Heart left ventricle (tissue), 16 donors: ENCODE measurements at regions of chrX and their contacts with region 1.

Region 1: GRCh38 chrX:9464435-9465371 is at the start of gene TBL1X:
- DNase-seq: peak; percentile 59 to 78 (median 69)
- ATAC-seq: peak in 3 of 4 donors; percentile 60 to 67 (median 62)
- H3K4me3 ChIP-seq: peak within 1 kb of the TSS; percentile 63 to 84 (median 71)
- H3K27ac ChIP-seq: peak within 1 kb of the TSS in 10 of 12 donors; percentile 40 to 86 (median 76)
- H3K4me1 ChIP-seq: peaks cover 0 to 39% (median 12%) of the 10 kb centered on the region in 12 donors
- H3K27me3 ChIP-seq: peaks cover 0 to 59% (median 0%) of the 10 kb centered on the region in 9 donors
- CTCF ChIP-seq: no peak
- POLR2A ChIP-seq: peak in 1 of 2 donors; percentile 31
- total RNA-seq, gene TBL1X: 9.2 to 30.7 (median 10.3) TPM

Region 2: GRCh38 chrX:9231491-9231890 is 233.2 kb before region 1 on chrX:
- intact Hi-C with region 1: no loop called
- DNase-seq: no peak
- ATAC-seq: no peak
- H3K4me3 ChIP-seq: no peak overlapping the region
- H3K27ac ChIP-seq: no peak overlapping the region
- H3K4me1 ChIP-seq: no peaks in the 10 kb centered on the region
- H3K27me3 ChIP-seq: peaks cover 0 to 12% (median 0%) of the 10 kb centered on the region in 9 donors
- CTCF ChIP-seq: no peak
- POLR2A ChIP-seq: no peak

Region 3: DNA sequence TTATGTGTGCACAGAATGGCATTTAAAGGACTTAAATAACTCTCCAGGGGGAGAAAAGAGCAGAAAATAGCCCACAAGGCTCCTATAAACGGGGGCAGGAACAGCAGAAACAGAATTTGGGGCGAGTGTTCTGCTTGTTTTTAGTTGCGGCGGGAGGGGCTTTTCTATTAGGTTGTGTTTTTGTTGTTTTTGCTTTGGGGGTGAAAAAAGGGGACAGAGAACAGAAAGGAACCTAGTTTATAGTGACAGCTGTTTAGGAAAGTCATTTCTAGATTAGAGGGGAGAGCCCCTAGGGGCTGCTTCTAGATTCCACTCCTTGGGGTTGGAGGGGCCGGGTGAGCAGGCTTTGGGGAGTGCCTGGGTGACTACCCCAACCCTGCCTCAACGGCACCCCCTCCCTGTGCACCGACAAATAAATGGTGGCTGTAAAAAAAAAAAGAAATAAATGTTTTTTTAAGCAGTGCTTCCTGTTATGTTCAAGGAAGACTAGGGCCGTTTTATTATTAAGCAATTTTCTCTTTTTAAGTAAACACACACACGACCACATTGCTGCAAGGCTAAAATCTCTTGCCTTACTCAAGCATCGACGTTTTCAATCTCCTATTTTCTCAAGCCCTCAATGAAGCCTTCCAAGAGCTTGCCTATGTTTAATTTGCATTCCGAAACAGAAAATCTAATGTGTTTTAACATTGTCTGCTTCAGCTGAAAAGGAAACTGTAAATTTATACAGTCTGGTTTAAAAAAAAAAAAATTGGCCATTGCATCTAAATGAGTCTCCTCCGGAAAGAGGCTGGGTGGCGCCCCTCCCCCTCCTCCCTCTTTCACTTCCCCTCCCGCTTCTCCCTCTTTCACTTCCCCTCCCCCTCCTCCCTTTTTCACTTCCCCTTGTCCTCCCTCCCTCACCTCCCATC is 123.2 kb before region 1 on chrX:
- intact Hi-C with region 1: loop called (anchors 1 to 10 kb)
- DNase-seq: peak; percentile 67 to 81 (median 74)
- ATAC-seq: peak in 3 of 4 donors; percentile 21 to 37 (median 25)
- H3K4me3 ChIP-seq: peak overlapping the region in 9 of 12 donors; percentile 10 to 46 (median 32)
- H3K27ac ChIP-seq: peak overlapping the region; percentile 44 to 96 (median 70)
- H3K4me1 ChIP-seq: peaks cover 0 to 44% (median 17%) of the 10 kb centered on the region in 12 donors
- H3K27me3 ChIP-seq: no peaks in the 10 kb centered on the region
- CTCF ChIP-seq: no peak
- POLR2A ChIP-seq: no peak

Region 4: DNA sequence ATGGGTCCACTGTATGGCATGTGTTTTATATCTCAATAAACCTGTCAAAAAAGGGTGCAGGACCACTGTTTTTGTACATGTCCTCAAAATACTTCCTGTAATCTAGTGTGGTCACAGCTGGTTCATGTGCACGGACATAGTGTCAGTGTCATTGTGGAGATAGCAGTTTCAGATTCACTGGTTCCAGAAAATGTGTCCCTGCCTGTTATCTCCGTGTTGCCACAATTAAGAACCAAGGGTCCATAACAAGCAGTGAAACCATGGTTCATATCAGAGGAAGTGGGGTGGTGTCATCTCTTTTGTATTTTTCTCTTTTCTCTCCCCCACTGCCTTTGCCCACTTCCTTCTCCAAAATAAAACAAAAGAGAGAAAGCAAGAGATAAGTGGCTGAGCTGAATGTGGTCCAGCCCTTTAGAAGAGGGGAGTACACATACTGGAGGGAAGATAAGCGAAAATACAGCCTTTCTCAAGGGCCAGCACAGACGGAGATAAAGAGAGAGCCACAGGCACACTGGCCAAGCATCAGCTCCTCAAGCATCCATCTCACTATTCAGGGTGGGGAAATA is 51.4 kb after region 1 on chrX:
- intact Hi-C with region 1: loop called in 1 of 10 experiments (anchors 5 kb)
- DNase-seq: no peak
- ATAC-seq: peak in 1 of 4 donors; percentile 10
- H3K4me3 ChIP-seq: no peak overlapping the region
- H3K27ac ChIP-seq: no peak overlapping the region
- H3K4me1 ChIP-seq: peaks cover 0 to 13% (median 3%) of the 10 kb centered on the region in 12 donors
- H3K27me3 ChIP-seq: no peaks in the 10 kb centered on the region
- CTCF ChIP-seq: no peak
- POLR2A ChIP-seq: no peak

Region 5: DNA sequence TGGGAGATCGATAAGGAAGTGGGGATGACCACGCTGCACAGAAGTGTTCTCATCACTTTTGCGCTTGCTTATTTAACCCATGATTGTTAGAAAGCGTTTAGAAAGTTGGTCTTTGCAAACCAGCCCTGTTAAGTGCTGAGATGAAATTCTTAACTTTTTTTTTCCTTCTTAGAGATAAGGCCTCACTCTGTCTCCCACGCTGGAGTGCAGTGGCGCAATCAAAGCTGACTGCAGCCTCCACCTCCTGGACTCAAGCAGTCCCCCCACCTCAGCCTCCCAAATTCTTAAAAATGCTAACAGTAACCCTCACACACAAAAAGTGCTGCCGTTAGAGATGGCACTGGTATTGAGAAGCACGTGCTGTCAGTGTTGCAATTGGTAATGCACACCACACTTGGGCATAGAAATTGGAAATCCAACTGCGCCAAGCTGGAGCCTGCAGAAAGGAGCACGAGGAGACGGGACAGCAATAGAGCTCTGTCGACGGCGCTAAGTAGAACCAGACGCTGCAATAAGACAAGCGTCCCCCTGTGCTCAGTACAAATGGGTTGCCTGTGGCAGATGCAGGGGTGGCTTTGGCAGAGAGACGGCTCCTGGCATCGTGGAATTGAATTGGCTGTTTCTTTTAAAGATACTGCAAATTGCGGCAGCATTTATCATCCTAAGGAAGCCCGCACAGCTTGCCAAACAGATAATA is 113.5 kb after region 1 on chrX:
- intact Hi-C with region 1: no loop called
- DNase-seq: no peak
- ATAC-seq: no peak
- H3K4me3 ChIP-seq: no peak overlapping the region
- H3K27ac ChIP-seq: no peak overlapping the region
- H3K4me1 ChIP-seq: peaks cover 0 to 15% (median 0%) of the 10 kb centered on the region in 12 donors
- H3K27me3 ChIP-seq: peaks cover 0 to 4% (median 0%) of the 10 kb centered on the region in 9 donors
- CTCF ChIP-seq: no peak
- POLR2A ChIP-seq: no peak

Region 6: GRCh38 chrX:9644335-9644734 is 179.6 kb after region 1 on chrX:
- intact Hi-C with region 1: loop called in 1 of 10 experiments (anchors 10 kb)
- DNase-seq: no peak
- ATAC-seq: peak in 1 of 4 donors; percentile 37
- H3K4me3 ChIP-seq: no peak overlapping the region
- H3K27ac ChIP-seq: no peak overlapping the region
- H3K4me1 ChIP-seq: peaks cover 0 to 22% (median 6%) of the 10 kb centered on the region in 12 donors
- H3K27me3 ChIP-seq: peaks cover 0 to 12% (median 0%) of the 10 kb centered on the region in 9 donors
- CTCF ChIP-seq: no peak
- POLR2A ChIP-seq: no peak

Region 7: DNA sequence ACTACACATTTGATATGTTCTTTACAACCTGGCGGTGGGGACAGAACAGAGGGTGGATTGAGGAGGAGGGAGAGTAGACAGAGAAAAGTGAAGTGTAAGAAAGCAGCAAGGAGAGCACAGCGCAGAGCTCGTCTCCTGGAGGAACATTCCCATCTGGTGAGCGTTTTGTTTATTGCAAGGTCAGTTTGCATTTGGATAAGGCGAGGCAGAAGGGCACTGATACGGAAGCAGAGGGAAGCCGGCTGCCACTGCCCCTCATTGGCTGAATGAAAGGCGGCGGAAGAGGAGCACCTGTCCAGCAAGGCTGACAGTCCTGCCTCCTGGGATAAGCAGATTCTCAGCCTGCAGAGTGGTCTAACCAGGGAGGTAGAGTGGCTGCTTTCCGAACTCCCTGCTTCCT is 217.8 kb after region 1 on chrX:
- intact Hi-C with region 1: loop called in 1 of 10 experiments (anchors 10 kb)
- DNase-seq: no peak
- ATAC-seq: peak in 3 of 4 donors; percentile 36 to 56 (median 42)
- H3K4me3 ChIP-seq: no peak overlapping the region
- H3K27ac ChIP-seq: no peak overlapping the region
- H3K4me1 ChIP-seq: peaks cover 0 to 10% (median 0%) of the 10 kb centered on the region in 12 donors
- H3K27me3 ChIP-seq: no peaks in the 10 kb centered on the region
- CTCF ChIP-seq: peak in 5 of 12 donors; percentile 16 to 31 (median 30)
- POLR2A ChIP-seq: no peak